Activated naive CD4-positive, alpha-beta T cell treated with anti-CD3 and anti-CD28 coated beads, Interleukin-2, amount 10 ng/mL, durations not matched to agents 7 days and 5 days (primary cell): ENCODE measurements at regions of chr3 and their contacts with region 1.

Region 1: DNA sequence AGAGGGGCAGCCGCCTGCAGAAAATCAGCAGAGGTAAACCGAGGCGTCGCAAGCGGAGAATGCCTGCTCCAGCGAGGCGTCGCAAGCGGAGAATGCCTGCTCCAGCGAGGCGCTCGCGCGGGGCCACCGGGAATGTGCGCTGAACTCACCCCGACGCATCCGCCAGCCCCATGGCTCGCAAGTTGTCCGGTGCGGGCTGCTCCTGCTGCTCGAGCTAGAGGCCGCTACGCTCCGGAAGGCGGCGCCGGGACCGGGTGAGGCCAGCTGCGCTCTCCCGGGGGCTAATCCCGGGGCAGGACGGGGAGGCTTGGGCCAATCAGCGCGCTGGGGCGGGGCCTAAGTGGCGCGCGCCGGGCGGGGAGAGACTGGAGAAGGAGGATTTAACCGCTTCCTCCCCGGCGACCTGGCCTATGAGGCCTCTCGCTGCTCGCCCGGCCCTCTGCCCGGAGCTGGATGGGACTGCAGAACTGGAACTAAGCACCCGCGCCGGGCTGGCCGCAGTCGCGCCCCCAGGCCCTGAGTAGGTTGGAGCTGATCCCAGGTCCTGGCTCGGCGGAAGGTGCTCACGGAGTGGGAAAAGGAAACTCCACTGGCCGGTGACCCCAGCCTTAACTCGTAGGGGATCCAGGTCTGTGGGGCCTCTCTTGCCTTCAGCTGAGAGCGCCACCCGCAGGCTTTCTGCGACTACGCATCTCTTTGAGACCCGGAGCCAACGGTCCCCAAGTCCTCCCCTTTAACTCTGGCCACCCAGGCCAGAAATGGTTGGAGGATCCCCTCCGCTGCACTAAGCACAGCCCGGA is at the start of gene SLC26A6:
- DNase-seq: peak; percentile 97
- H3K4me3 Mint-ChIP-seq: peak within 1 kb of the TSS; percentile 87
- H3K27ac Mint-ChIP-seq: peak within 1 kb of the TSS; percentile 87
- H3K4me1 Mint-ChIP-seq: peaks cover 28% of the 10 kb centered on the region
- H3K27me3 Mint-ChIP-seq: peaks cover 3% of the 10 kb centered on the region

Region 2: GRCh38 chr3:48623851-48624547 is 11.4 kb before region 1 on chr3:
- CTCF ChIA-PET with region 1: interaction called, 14 read pairs
- DNase-seq: no peak
- H3K4me3 Mint-ChIP-seq: no peak overlapping the region
- H3K27ac Mint-ChIP-seq: peak overlapping the region; percentile 76
- H3K4me1 Mint-ChIP-seq: peaks cover 17% of the 10 kb centered on the region
- H3K27me3 Mint-ChIP-seq: no peaks in the 10 kb centered on the region